ENCODE measurements at regions of chr14 and their contacts with region 1.

Region 1: GRCh38 chr14:102430212-102430908 is 67.6 kb downstream of the TECPR2 start:
- DNase-seq: no peak
- ATAC-seq: peak; percentile 43; the same call in 1 of the 2 replicates
- H3K4me3 ChIP-seq: no peak overlapping the region
- H3K27ac ChIP-seq: no peak overlapping the region
- H3K4me1 ChIP-seq: no peaks in the 10 kb centered on the region
- H3K27me3 ChIP-seq: no peaks in the 10 kb centered on the region
- CTCF ChIP-seq: no peak

Region 2: DNA sequence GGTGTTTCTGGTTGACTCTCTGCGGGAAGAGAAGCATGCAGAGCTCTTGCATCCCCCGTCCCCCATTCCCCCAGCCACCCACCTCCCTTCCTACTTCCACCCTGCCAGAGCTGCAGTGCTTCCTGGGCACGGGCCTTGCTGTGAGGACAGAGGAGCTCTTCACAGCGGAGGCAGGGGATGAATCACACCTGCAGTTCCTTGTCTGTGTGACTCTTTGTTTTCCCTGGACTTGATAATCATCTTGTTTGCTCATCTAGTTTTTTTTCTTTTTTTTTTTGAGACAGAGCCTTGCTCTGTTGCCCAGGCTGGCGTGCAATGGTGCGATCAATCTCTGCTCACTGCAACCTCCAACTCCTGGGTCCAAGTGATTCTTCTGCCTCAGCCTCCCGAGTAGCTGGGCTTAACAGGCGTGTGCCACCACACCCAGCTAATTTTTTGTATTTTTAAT is 51.5 kb after region 1 on chr14:
- CTCF ChIA-PET with region 1: no interaction called
- POLR2A ChIA-PET with region 1: interaction called, 10 read pairs
- intact Hi-C with region 1: no loop called
- DNase-seq: peak; percentile 86
- ATAC-seq: peak; percentile 99
- H3K4me3 ChIP-seq: no peak overlapping the region
- H3K27ac ChIP-seq: peak overlapping the region; percentile 77
- H3K4me1 ChIP-seq: peaks cover 13% of the 10 kb centered on the region
- H3K27me3 ChIP-seq: no peaks in the 10 kb centered on the region
- CTCF ChIP-seq: no peak

Region 3: DNA sequence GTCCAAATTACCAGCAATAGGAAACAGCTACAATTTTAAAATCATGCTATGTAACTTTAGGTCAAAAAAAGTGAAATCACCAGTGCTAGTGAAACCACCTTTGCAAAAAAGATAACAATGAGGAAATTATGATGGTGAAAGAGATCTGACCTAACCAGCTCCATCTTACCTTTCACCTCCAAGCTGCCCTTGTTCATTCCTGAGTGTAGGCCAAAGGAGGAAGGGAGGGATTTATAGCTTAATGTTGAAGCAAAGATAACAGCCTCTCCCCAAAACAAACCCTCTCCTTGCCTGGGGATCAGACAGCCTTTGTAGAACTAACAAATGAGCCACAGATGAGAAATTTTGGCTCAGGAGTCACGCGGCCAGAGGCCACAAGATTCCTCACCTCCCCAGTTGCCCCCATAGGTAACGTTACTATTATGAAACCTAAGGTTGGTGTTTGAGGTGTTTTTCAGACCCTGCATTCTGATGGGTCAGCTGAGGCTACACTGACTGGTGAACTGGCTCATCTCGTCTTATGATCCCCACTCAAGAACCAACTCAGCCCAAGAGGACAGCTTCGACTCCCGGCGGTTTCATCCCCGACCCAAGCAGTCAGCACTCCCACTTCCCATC is 820.6 kb after region 1 on chr14:
- CTCF ChIA-PET with region 1: no interaction called
- POLR2A ChIA-PET with region 1: no interaction called
- intact Hi-C with region 1: no loop called
- DNase-seq: peak; percentile 56
- ATAC-seq: peak; percentile 16; the same call in 1 of the 2 replicates
- H3K4me3 ChIP-seq: no peak overlapping the region
- H3K27ac ChIP-seq: peak overlapping the region; percentile 54
- H3K4me1 ChIP-seq: peaks cover 32% of the 10 kb centered on the region
- H3K27me3 ChIP-seq: no peaks in the 10 kb centered on the region
- CTCF ChIP-seq: no peak